Prostate gland (tissue), 2 donors: ENCODE measurements at regions of chr18 and their contacts with region 1.

Region 1: DNA sequence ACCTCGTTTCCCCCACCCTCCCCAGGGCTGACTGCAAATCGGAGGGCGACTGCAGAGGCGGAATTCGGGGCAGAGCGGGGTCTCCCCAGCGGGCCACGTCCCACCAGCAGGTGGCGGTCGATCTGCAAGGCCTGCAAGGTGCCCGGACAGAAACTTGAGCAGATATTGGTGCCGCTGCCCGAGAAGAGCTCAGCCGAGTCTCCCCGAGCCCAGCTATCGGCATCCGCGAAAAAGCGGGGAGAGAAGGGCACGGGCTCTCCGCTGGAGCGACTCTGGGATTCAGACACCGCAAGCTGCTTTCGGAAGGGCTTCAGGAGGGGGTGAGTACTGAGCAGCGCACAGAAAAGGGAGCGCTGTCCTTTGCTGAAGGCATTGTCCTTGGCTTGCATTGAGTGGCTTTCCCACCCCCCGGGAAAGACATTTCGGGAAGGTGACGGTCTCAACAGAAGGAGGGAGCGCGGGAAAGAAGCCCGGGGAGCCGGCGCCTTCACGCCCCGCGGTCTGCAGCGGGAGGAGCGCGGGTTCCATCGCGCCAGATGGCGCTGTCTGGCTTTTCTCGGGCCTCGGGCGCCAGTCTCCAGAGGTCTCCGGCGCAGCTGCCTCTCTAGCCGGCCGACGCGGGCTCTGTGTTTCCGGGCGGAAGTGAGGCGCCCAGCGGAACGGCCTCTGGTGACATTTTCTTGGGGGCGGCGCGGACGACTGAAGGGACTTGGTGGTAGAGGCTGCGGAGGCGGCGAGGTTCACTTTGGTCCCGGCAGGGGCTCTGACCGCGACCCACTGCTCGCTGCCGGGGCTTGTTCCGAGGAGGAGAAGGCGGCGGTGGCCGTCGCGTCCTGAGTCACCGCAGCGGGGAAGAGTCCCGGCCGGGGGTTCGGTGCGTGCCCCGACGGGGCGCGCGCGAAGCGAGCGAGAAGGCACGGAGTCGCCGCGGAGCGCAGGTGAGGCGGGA is 69.5 kb downstream of the HAUS1 start:
- DNase-seq: peak; percentile 89
- H3K4me3 ChIP-seq: peak overlapping the region; percentile 84 to 94
- H3K27ac ChIP-seq: peak overlapping the region; percentile 72 to 92
- H3K4me1 ChIP-seq: no peaks in the 10 kb centered on the region
- H3K27me3 ChIP-seq: no peaks in the 10 kb centered on the region
- CTCF ChIP-seq: peak; percentile 68 to 94 (median 78)
- POLR2A ChIP-seq: no peak

Region 2: GRCh38 chr18:46130061-46130460 is 43.6 kb before region 1 on chr18:
- intact Hi-C with region 1: no loop called
- DNase-seq: no peak
- H3K4me3 ChIP-seq: no peak overlapping the region
- H3K27ac ChIP-seq: no peak overlapping the region
- H3K4me1 ChIP-seq: no peaks in the 10 kb centered on the region
- H3K27me3 ChIP-seq: no peaks in the 10 kb centered on the region
- CTCF ChIP-seq: no peak
- POLR2A ChIP-seq: no peak

Region 3: DNA sequence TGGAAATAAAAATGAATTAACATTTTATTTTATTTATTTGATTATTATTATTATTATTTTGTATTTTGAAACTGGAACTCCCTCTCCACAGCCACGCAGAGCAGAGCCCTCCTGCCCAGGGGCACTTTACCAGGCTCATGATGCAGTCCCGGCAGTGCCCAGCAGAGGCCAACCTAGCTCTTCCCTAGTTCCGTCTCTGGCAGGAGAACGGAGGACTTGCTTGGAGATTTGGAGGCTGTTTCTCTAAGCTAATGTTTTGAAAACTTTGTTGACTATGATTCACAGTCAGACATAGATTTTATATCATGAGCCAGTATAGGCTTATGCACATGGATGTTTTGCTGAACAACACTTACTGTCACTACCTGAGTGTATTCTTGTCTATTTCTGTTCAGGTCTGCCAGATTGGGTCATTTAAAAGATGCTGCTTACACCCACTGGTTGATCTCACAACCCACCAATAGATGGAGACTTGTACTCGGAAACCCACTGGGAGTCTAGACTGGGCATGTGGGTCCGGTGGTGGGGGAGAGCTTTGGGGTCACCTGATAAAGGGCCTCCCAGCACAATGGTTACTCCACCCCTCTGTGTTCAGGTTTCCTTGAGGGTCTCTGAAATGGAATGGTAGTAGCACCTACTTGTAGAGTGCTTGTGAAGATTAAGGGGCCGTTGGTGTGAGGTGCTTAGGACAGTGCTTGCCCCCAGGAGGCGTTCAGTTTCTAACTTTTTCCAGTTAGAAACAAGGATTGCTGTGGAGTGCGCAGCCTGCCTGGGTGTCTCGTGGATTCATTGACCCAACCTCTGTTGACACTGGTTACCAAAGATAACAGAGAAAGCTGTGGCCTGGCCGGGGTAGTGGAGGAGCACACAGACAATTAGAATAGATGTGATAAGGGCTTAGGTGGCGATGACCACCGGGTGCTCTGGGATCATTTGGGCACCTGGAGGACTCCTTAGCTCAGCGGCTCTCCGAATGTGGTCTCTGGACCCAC is 107.8 kb after region 1 on chr18:
- intact Hi-C with region 1: loop called (anchors 5 kb)
- DNase-seq: peak; percentile 64
- H3K4me3 ChIP-seq: no peak overlapping the region
- H3K27ac ChIP-seq: no peak overlapping the region
- H3K4me1 ChIP-seq: no peaks in the 10 kb centered on the region
- H3K27me3 ChIP-seq: no peaks in the 10 kb centered on the region
- CTCF ChIP-seq: peak; percentile 49 to 86 (median 83)
- POLR2A ChIP-seq: no peak

Region 4: GRCh38 chr18:46369323-46369722 is 195.7 kb after region 1 on chr18:
- intact Hi-C with region 1: no loop called
- DNase-seq: no peak
- H3K4me3 ChIP-seq: no peak overlapping the region
- H3K27ac ChIP-seq: no peak overlapping the region
- H3K4me1 ChIP-seq: no peaks in the 10 kb centered on the region
- H3K27me3 ChIP-seq: no peaks in the 10 kb centered on the region
- CTCF ChIP-seq: no peak
- POLR2A ChIP-seq: no peak

Region 5: GRCh38 chr18:46481048-46481846 is 307.6 kb after region 1 on chr18:
- intact Hi-C with region 1: loop called (anchors 10 kb)
- DNase-seq: peak; percentile 52
- H3K4me3 ChIP-seq: no peak overlapping the region
- H3K27ac ChIP-seq: no peak overlapping the region
- H3K4me1 ChIP-seq: no peaks in the 10 kb centered on the region
- H3K27me3 ChIP-seq: peaks cover 3% of the 10 kb centered on the region
- CTCF ChIP-seq: peak; percentile 62 to 80 (median 72)
- POLR2A ChIP-seq: no peak

Region 6: GRCh38 chr18:46657115-46657955 is 483.7 kb after region 1 on chr18 and contains the start of gene LOXHD1:
- intact Hi-C with region 1: loop called (anchors 2 kb)
- DNase-seq: no peak
- H3K4me3 ChIP-seq: no peak within 1 kb of the TSS
- H3K27ac ChIP-seq: no peak within 1 kb of the TSS
- H3K4me1 ChIP-seq: no peaks in the 10 kb centered on the region
- H3K27me3 ChIP-seq: no peaks in the 10 kb centered on the region
- CTCF ChIP-seq: no peak
- POLR2A ChIP-seq: no peak
- total RNA-seq, gene LOXHD1: 1.4 TPM in 1 of 2 donors, not detected in the other